Activated T-helper 2 cell treated with anti-CD3 and anti-CD28 coated beads, Interferon-gamma antibody, Interleukin-2, Interleukin-4, amounts not matched to agents 10 μg/mL and 5 μg/mL and 100 μg/mL, durations not matched to agents 14 hours and 24 hours and 36 hours (primary cell): ENCODE measurements at regions of chr5 and their contacts with region 1.

Region 1: GRCh38 chr5:172697123-172698121 is 56.4 kb downstream of the NEURL1B start:
- DNase-seq: peak; percentile 76
- H3K4me3 Mint-ChIP-seq: peak overlapping the region; percentile 78
- H3K27ac Mint-ChIP-seq: peak overlapping the region; percentile 61
- H3K4me1 Mint-ChIP-seq: peaks cover 9% of the 10 kb centered on the region
- H3K27me3 Mint-ChIP-seq: peaks cover 27% of the 10 kb centered on the region

Region 2: DNA sequence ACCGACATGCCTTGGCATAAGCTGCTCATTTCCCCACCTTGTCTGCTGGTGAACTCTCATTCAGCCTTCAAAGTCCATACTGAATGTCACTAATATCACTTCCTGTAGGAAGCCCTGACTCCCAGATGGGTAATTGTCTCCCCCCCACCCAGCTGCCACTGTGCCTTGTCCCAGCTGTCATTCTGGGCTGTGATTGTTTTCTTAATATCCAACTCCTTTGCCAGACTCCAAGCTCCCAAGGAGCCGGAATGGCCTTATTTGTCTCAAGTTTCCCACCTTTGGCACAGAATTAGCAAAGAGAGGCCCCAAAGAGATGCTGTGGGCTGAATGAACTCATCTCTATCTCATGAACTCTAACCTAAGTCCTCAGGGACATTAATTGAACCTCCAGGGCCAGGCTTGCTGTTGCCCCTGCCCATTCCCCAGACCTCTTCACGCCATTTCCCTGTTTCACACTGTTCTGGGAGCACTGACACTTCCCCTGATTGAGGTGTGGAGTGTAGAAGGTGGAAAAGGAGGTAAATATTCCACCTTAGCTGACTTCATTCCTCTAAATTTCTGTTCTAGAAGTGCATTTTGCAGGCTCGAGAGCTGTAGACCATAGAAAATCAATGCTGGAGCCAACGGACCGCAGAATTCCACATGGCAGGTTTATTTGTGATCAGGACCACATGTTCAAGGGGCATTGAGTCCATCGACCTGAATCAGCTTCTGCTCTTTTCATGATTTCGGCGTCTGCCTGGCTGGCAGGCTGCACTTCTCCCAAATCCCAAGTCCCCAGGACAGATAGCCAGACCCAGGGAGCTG is 238.2 kb before region 1 on chr5:
- intact Hi-C with region 1: loop called (anchors 1 kb)
- DNase-seq: no peak
- H3K4me3 Mint-ChIP-seq: no peak overlapping the region
- H3K27ac Mint-ChIP-seq: no peak overlapping the region
- H3K4me1 Mint-ChIP-seq: peaks cover 12% of the 10 kb centered on the region
- H3K27me3 Mint-ChIP-seq: peaks cover 17% of the 10 kb centered on the region

Region 3: DNA sequence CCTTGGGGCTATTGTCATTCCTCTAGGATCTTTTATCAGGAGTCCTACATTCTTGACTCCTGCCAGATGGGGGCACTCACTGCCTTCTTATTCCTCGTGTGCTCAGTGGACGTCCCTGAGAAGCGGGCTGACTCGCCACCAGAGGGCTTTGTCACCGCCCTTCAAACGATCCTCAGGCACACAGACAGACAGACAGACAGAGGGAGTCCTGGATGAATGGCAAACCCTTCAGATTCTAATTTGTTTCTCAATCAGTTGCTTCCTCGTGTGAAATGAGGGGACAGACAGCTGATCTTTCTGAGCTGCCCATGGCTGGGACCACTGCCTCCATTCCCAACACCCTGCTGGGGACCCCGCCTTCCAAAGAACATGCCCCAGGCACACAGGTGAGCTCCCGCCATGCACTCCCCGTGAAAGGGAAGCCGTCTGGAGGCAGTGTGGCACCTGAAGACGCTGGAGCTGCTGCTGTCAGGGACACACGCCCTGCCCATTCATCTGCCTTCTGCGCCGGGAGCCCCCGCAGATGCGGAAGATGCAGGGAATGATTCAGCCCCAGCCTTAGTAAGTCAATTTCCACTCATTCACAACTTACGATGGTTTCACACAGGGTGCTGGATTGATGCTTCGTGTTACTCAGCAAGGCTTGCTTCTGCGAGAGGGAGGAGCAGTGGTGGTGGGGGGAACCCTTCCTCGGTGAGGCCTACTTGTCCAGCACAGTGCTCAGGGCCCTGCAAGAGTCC is 218.2 kb before region 1 on chr5:
- intact Hi-C with region 1: loop called (anchors 1 kb)
- DNase-seq: peak; percentile 20
- H3K4me3 Mint-ChIP-seq: no peak overlapping the region
- H3K27ac Mint-ChIP-seq: no peak overlapping the region
- H3K4me1 Mint-ChIP-seq: no peaks in the 10 kb centered on the region
- H3K27me3 Mint-ChIP-seq: peaks cover 4% of the 10 kb centered on the region

Region 4: GRCh38 chr5:172637740-172638139 is 59.7 kb before region 1 on chr5:
- intact Hi-C with region 1: loop called (anchors 2 kb)
- DNase-seq: no peak
- H3K4me3 Mint-ChIP-seq: no peak overlapping the region
- H3K27ac Mint-ChIP-seq: no peak overlapping the region
- H3K4me1 Mint-ChIP-seq: peaks cover 6% of the 10 kb centered on the region
- H3K27me3 Mint-ChIP-seq: peaks cover 27% of the 10 kb centered on the region

Region 5: GRCh38 chr5:172670005-172670434 is 27.4 kb before region 1 on chr5:
- intact Hi-C with region 1: no loop called
- DNase-seq: no peak
- H3K4me3 Mint-ChIP-seq: no peak overlapping the region
- H3K27ac Mint-ChIP-seq: no peak overlapping the region
- H3K4me1 Mint-ChIP-seq: no peaks in the 10 kb centered on the region
- H3K27me3 Mint-ChIP-seq: peaks cover 6% of the 10 kb centered on the region

Region 6: GRCh38 chr5:172816901-172817564 is 119.6 kb after region 1 on chr5:
- intact Hi-C with region 1: no loop called
- DNase-seq: no peak
- H3K4me3 Mint-ChIP-seq: no peak overlapping the region
- H3K27ac Mint-ChIP-seq: no peak overlapping the region
- H3K4me1 Mint-ChIP-seq: peaks cover 6% of the 10 kb centered on the region
- H3K27me3 Mint-ChIP-seq: no peaks in the 10 kb centered on the region